ENCODE measurements at regions of chrX and their contacts with region 1.

Region 1: GRCh38 chrX:68699960-68700746 is 52.7 kb downstream of the STARD8 start:
- DNase-seq: peak; percentile 25 to 66 (median 46)
- ATAC-seq: peak; percentile 51
- H3K4me3 ChIP-seq: no peak overlapping the region
- H3K27ac ChIP-seq: peak overlapping the region in 3 of 4 donors; percentile 15 to 59 (median 57)
- H3K4me1 ChIP-seq: peaks cover 58% of the 10 kb centered on the region
- H3K27me3 ChIP-seq: no peaks in the 10 kb centered on the region
- CTCF ChIP-seq: no peak
- POLR2A ChIP-seq: no peak

Region 2: GRCh38 chrX:68504237-68504636 is 195.9 kb before region 1 on chrX:
- intact Hi-C with region 1: loop called (anchors 10 kb)
- DNase-seq: no peak
- ATAC-seq: no peak
- H3K4me3 ChIP-seq: no peak overlapping the region
- H3K27ac ChIP-seq: no peak overlapping the region
- H3K4me1 ChIP-seq: peaks cover 16% of the 10 kb centered on the region
- H3K27me3 ChIP-seq: no peaks in the 10 kb centered on the region
- CTCF ChIP-seq: no peak
- POLR2A ChIP-seq: no peak

Measured in body of pancreas (tissue), 4 donors.